ENCODE measurements at regions of chr3 and their contacts with region 1.

Region 1: DNA sequence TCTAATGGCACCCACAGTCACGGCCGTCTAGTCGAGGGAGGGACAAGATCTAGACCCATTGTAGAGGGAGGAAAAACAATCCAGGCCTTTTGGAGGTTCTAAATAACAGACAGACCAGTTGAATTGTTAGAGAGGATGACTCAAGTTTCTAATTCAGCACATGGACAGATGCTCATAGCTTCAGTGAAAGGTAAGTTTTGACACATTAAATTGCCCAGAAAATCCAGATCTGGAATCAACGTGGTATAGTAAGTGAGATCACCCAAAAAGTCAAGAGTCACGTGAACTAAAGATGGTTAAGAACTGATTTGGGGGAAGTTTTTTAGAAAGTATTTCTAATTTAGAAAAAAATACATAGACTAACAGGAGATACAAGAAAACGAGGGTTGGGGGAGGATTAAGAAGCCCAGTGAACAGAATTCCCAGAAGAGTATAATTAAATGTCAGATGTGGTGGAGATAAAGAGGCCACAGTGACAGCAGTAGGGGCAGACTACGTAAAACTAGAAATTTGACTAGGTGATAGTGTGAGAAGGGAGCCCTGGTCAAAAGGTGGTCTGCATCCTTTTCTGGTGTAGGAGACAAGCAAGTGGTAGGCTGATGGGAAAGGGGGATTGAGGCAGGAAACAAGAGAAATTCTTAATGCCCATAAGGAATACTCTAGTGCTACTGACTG is 47.1 kb downstream of the CAPN7 start:
- DNase-seq: no peak
- ATAC-seq: no peak
- H3K4me3 ChIP-seq: no peak overlapping the region
- H3K27ac ChIP-seq: no peak overlapping the region
- H3K4me1 ChIP-seq: peaks cover 3% of the 10 kb centered on the region
- H3K27me3 ChIP-seq: no peaks in the 10 kb centered on the region
- CTCF ChIP-seq: no peak

Region 2: GRCh38 chr3:15214758-15215157 is 38.4 kb before region 1 on chr3:
- intact Hi-C with region 1: loop called in 1 of 2 experiments (anchors 5 kb)
- DNase-seq: no peak
- ATAC-seq: no peak
- H3K4me3 ChIP-seq: no peak overlapping the region
- H3K27ac ChIP-seq: no peak overlapping the region
- H3K4me1 ChIP-seq: peaks cover 35% of the 10 kb centered on the region
- H3K27me3 ChIP-seq: no peaks in the 10 kb centered on the region
- CTCF ChIP-seq: no peak

Region 3: GRCh38 chr3:15500107-15500724 is 247.1 kb after region 1 on chr3:
- intact Hi-C with region 1: no loop called
- DNase-seq: no peak
- ATAC-seq: no peak
- H3K4me3 ChIP-seq: no peak overlapping the region
- H3K27ac ChIP-seq: peak overlapping the region; percentile 85
- H3K4me1 ChIP-seq: peaks cover 65% of the 10 kb centered on the region
- H3K27me3 ChIP-seq: no peaks in the 10 kb centered on the region
- CTCF ChIP-seq: no peak